ENCODE measurements at regions of chr7 and their contacts with region 1.

Region 1: GRCh38 chr7:14691597-14692203 is 210.9 kb downstream of the DGKB start:
- DNase-seq: peak; percentile 57
- H3K4me3 Mint-ChIP-seq: no peak overlapping the region
- H3K27ac Mint-ChIP-seq: no peak overlapping the region
- H3K4me1 Mint-ChIP-seq: peaks cover 21% of the 10 kb centered on the region
- H3K27me3 Mint-ChIP-seq: no peaks in the 10 kb centered on the region
- CTCF ChIP-seq: peak; percentile 95

Region 2: GRCh38 chr7:13524076-13524475 is 1167.6 kb before region 1 on chr7:
- CTCF ChIA-PET with region 1: no interaction called
- intact Hi-C with region 1: loop called (anchors 2 kb)
- DNase-seq: no peak
- H3K4me3 Mint-ChIP-seq: no peak overlapping the region
- H3K27ac Mint-ChIP-seq: no peak overlapping the region
- H3K4me1 Mint-ChIP-seq: no peaks in the 10 kb centered on the region
- H3K27me3 Mint-ChIP-seq: no peaks in the 10 kb centered on the region
- CTCF ChIP-seq: no peak

Region 3: DNA sequence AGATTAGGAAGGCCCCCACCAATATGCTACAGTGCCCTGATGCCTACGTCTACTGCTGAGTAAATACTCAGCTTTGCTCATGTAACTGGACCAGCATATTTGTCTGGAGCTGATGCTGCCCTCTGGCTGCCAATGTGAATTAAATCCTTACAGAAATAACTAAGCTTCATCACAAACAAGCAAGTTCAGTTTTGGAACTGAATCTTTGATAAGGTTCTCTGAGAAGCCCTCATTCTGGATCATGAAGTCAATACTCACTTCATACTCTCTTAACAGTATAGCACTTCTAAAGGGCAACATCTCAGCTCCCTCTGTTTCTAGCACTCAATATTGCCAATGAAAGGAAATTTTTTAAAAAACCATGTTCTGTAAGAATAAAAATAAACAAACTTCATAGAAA is 948.9 kb before region 1 on chr7:
- CTCF ChIA-PET with region 1: no interaction called
- intact Hi-C with region 1: loop called (anchors 1 kb)
- DNase-seq: peak; percentile 41
- H3K4me3 Mint-ChIP-seq: no peak overlapping the region
- H3K27ac Mint-ChIP-seq: no peak overlapping the region
- H3K4me1 Mint-ChIP-seq: peaks cover 10% of the 10 kb centered on the region
- H3K27me3 Mint-ChIP-seq: no peaks in the 10 kb centered on the region
- CTCF ChIP-seq: peak; percentile 46

Region 4: GRCh38 chr7:13990984-13991790 is 700.5 kb before region 1 on chr7:
- CTCF ChIA-PET with region 1: interaction called, 23 read pairs
- intact Hi-C with region 1: loop called (anchors 2 kb)
- DNase-seq: peak; percentile 99
- H3K4me3 Mint-ChIP-seq: no peak overlapping the region
- H3K27ac Mint-ChIP-seq: no peak overlapping the region
- H3K4me1 Mint-ChIP-seq: no peaks in the 10 kb centered on the region
- H3K27me3 Mint-ChIP-seq: no peaks in the 10 kb centered on the region
- CTCF ChIP-seq: no peak

Region 5: DNA sequence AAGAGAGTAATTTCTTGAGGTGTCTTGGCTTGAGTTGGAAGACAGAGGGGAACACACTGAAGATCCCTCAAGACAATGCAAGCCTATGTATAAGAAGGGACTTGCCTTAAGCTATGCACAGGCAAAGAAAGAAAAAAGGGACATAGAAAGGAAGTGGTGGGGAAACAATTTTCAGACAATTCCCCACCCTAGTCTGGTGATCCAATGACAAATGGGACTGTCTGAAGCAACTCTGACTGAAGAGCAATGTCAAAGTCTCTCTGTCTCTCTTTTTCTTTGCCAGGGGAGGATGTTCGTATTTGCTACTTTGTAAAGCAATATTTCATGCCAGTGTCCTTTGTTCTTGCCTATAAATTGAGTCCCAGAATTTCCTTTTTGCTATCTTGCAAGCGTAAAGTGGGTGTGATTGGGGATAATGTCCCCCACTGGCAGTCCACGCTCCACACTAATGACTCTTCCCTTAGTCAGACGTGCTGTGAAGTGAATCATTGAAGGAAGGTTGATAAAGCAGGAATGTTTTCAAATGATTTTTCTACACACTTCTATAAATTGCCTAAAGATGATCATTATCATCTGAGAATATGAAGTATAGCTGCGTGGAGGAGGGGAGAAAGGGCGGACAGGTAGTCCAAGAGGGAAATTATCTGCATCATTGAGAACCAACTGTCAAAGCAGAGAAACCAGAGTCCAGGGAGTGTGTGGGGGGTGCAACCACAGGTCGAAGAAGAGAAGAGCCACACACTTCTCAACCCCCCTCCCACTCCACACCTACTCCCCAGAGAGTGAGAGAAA is 458.4 kb before region 1 on chr7:
- CTCF ChIA-PET with region 1: no interaction called
- intact Hi-C with region 1: loop called (anchors 10 kb)
- DNase-seq: peak; percentile 41
- H3K4me3 Mint-ChIP-seq: peak overlapping the region; percentile 14
- H3K27ac Mint-ChIP-seq: peak overlapping the region; percentile 46
- H3K4me1 Mint-ChIP-seq: peaks cover 41% of the 10 kb centered on the region
- H3K27me3 Mint-ChIP-seq: no peaks in the 10 kb centered on the region
- CTCF ChIP-seq: no peak

Region 6: GRCh38 chr7:14457568-14458453 is 233.9 kb before region 1 on chr7:
- CTCF ChIA-PET with region 1: interaction called, 4 read pairs
- intact Hi-C with region 1: loop called (anchors 2 kb)
- DNase-seq: peak; percentile 84
- H3K4me3 Mint-ChIP-seq: peak overlapping the region; percentile 39
- H3K27ac Mint-ChIP-seq: no peak overlapping the region
- H3K4me1 Mint-ChIP-seq: no peaks in the 10 kb centered on the region
- H3K27me3 Mint-ChIP-seq: no peaks in the 10 kb centered on the region
- CTCF ChIP-seq: peak; percentile 91

Region 7: DNA sequence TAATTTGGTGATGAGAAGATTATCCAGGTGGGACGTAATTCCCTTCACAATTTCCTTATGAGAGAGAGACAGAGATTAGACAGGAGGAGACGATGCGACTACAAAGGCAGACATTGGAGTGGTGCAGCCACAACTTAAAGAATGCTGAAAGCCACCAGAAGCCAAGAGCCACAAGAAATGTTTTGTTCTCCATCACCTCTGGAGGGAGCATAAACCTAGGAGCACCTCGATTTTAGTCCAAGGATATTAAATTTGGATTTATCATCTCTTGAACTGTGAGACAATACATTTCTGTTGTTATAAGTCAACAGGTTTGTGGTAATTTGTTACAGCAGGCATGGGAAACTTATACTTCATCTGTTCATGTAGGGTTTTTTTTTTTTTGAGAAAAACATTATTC is 208.0 kb before region 1 on chr7:
- CTCF ChIA-PET with region 1: interaction called, 6 read pairs
- intact Hi-C with region 1: loop called (anchors 1 kb)
- DNase-seq: no peak
- H3K4me3 Mint-ChIP-seq: no peak overlapping the region
- H3K27ac Mint-ChIP-seq: no peak overlapping the region
- H3K4me1 Mint-ChIP-seq: no peaks in the 10 kb centered on the region
- H3K27me3 Mint-ChIP-seq: no peaks in the 10 kb centered on the region
- CTCF ChIP-seq: no peak

Region 8: DNA sequence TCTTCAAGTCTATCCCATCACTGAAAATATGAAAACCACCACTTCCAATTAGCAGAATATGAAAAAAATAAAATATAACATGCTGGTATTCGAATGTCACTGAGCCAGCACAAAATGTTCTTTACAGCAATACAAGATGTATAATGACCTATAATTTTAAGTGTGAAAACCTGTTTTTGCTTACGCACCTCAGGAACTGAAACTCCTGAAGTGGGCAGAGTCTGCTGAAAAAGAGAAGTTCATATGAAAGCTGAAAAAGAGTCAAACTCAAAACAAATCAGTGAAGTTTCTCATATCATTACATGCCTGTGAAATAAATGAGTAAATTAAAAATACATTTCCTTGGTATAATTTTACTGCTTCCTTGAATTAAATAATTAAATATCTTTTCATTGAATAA is 61.7 kb before region 1 on chr7:
- CTCF ChIA-PET with region 1: no interaction called
- intact Hi-C with region 1: no loop called
- DNase-seq: no peak
- H3K4me3 Mint-ChIP-seq: no peak overlapping the region
- H3K27ac Mint-ChIP-seq: no peak overlapping the region
- H3K4me1 Mint-ChIP-seq: peaks cover 11% of the 10 kb centered on the region
- H3K27me3 Mint-ChIP-seq: no peaks in the 10 kb centered on the region
- CTCF ChIP-seq: no peak

Region 9: GRCh38 chr7:14734839-14735321 is 43.2 kb after region 1 on chr7:
- CTCF ChIA-PET with region 1: no interaction called
- intact Hi-C with region 1: no loop called
- DNase-seq: no peak
- H3K4me3 Mint-ChIP-seq: no peak overlapping the region
- H3K27ac Mint-ChIP-seq: no peak overlapping the region
- H3K4me1 Mint-ChIP-seq: no peaks in the 10 kb centered on the region
- H3K27me3 Mint-ChIP-seq: no peaks in the 10 kb centered on the region
- CTCF ChIP-seq: no peak

Measured in Calu3 (cell line).